ENCODE measurements at regions of chr13 and their contacts with region 1.

Region 1: DNA sequence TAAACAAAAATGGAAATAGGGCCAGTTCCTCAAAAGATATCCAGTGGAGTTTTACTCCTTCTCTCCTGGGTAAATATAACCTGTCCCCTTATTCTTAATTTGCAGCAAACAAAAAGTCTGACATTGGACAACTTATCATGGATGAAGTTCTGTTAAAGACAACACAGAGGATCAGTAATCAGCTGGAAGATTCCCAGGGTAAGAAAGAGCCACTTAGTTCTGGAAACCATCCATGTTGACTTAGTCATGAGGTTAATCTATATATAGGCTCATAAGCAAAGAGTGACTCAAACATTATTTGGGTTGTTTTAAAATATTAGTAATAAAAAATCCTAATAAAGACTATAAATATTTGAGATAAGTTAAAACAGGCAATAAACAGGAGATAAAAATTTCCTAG is 40.5 kb upstream of the EBPL start:
- DNase-seq: no peak
- H3K4me3 ChIP-seq: no peak overlapping the region
- H3K4me3 Mint-ChIP-seq: no peak overlapping the region
- H3K27ac ChIP-seq: no peak overlapping the region
- H3K27ac Mint-ChIP-seq: no peak overlapping the region
- H3K4me1 ChIP-seq: no peaks in the 10 kb centered on the region
- H3K4me1 Mint-ChIP-seq: peaks cover 0 to 4% (median 2%) of the 10 kb centered on the region in 4 donors
- H3K27me3 ChIP-seq: no peaks in the 10 kb centered on the region
- H3K27me3 Mint-ChIP-seq: no peaks in the 10 kb centered on the region

Region 2: DNA sequence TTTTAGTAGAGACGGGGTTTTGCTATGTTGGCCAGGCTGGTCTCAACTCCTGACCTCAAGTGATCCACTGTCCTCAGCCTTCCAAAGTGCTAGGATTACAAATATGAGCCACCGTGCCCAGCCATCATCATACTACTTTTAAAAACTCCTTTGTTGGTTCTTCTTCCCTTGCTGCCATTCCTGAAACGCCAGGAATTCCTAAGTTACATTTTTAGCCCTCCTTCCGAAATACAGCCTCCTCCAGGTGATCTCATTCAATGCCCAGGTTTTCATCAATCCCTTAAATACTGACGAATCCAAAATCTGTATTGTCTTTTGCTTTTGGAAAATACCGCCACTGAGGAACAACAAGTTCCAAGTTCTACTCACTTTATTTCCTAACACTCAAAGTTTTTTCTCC is 15.2 kb before region 1 on chr13:
- CTCF ChIA-PET with region 1: no interaction called
- POLR2A ChIA-PET with region 1: no interaction called
- intact Hi-C with region 1: no loop called
- DNase-seq: no peak
- H3K4me3 ChIP-seq: no peak overlapping the region
- H3K4me3 Mint-ChIP-seq: no peak overlapping the region
- H3K27ac ChIP-seq: no peak overlapping the region
- H3K27ac Mint-ChIP-seq: no peak overlapping the region
- H3K4me1 ChIP-seq: no peaks in the 10 kb centered on the region
- H3K4me1 Mint-ChIP-seq: no peaks in the 10 kb centered on the region
- H3K27me3 ChIP-seq: no peaks in the 10 kb centered on the region
- H3K27me3 Mint-ChIP-seq: no peaks in the 10 kb centered on the region

Region 3: DNA sequence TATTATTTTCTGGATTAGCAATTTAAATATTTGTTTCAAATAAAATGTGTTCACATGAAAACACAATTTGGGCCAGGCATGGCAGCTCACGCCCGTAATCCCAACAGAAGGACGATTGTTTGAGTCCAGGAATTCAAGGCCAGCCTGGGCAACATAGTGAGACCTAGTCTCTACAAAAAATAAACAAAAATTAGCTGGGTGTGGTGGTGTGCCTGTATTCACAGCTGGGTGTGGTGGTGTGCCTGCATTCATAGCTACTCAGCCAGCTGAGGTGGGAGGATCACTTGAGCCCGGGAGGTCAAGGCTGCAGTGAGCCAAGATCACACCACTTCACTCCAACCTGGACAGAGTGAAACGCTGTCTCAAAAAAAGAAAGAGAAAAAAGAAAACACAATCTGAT is 14.3 kb after region 1 on chr13:
- CTCF ChIA-PET with region 1: no interaction called
- POLR2A ChIA-PET with region 1: no interaction called
- intact Hi-C with region 1: no loop called
- DNase-seq: no peak
- H3K4me3 ChIP-seq: no peak overlapping the region
- H3K4me3 Mint-ChIP-seq: no peak overlapping the region
- H3K27ac ChIP-seq: no peak overlapping the region
- H3K27ac Mint-ChIP-seq: no peak overlapping the region
- H3K4me1 ChIP-seq: no peaks in the 10 kb centered on the region
- H3K4me1 Mint-ChIP-seq: peaks cover 6 to 16% (median 9%) of the 10 kb centered on the region in 4 donors
- H3K27me3 ChIP-seq: no peaks in the 10 kb centered on the region
- H3K27me3 Mint-ChIP-seq: no peaks in the 10 kb centered on the region

Region 4: DNA sequence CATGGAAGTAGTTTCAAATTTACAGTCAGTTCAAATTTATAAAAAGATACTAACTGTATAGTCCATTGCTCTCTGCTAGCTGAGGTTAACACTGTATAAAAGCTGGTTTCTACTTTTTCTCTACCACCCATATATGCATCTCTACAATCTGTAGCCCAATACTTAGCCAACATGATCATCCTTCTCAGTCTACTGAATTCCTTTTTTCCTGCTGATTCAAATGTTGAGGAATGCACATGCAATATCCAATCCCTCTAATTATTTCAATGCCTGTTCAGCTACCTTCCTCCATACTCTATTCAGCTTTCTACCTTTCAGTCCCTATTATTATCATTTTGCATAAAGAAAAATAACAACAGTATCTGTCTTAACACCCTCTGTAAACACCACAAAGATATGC is 45.1 kb after region 1 on chr13:
- CTCF ChIA-PET with region 1: no interaction called
- POLR2A ChIA-PET with region 1: no interaction called
- intact Hi-C with region 1: loop called (anchors 10 kb)
- DNase-seq: no peak
- H3K4me3 ChIP-seq: no peak overlapping the region
- H3K4me3 Mint-ChIP-seq: no peak overlapping the region
- H3K27ac ChIP-seq: no peak overlapping the region
- H3K27ac Mint-ChIP-seq: peak overlapping the region in 1 of 7 donors; percentile 24
- H3K4me1 ChIP-seq: peaks cover 16% of the 10 kb centered on the region
- H3K4me1 Mint-ChIP-seq: peaks cover 41 to 66% (median 50%) of the 10 kb centered on the region in 4 donors
- H3K27me3 ChIP-seq: no peaks in the 10 kb centered on the region
- H3K27me3 Mint-ChIP-seq: no peaks in the 10 kb centered on the region